Posterior vena cava (tissue), 2 donors: ENCODE measurements at regions of chr19 and their contacts with region 1.

Region 1: DNA sequence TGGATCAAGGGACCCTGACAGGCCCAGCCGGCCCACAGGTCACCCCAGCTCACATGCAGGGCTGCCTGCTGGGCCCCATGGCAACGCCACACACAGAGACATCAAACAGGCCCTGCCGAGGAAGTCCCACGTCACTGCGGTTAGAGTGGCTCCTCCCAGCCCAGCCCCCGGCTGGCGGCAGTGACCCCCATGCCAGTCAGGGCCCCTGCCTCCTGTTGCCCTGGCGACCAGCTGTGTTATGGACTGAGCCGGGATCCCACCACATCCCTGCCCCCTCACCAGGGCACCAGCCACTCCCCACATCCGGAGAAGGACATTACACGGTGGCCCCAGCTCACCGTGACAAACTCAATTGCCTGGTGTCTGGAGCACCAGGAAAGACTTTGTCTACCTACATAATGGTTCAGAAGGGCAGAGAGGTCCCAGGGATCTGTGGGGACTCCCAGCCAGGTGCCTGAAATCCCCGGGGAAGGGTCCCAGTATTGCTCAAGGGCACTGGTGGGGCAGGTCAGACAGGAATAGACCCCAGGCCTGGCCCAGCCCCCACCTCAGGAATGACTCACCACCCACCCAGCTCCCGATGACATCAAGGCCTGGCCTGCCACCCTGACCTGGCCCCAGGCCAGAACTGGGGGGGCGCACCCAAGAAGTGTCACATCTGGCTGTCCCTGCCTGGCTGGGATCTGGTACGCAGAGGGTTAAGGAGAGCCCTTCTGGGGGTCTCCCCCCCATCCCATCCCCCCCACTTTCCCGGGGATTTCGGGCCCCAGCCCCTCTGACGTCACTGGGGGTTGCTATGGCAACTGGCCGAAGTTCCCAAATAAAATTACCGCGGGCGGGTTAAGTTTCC is 30.2 kb upstream of the NANOS3 start:
- DNase-seq: peak; percentile 97

Region 2: DNA sequence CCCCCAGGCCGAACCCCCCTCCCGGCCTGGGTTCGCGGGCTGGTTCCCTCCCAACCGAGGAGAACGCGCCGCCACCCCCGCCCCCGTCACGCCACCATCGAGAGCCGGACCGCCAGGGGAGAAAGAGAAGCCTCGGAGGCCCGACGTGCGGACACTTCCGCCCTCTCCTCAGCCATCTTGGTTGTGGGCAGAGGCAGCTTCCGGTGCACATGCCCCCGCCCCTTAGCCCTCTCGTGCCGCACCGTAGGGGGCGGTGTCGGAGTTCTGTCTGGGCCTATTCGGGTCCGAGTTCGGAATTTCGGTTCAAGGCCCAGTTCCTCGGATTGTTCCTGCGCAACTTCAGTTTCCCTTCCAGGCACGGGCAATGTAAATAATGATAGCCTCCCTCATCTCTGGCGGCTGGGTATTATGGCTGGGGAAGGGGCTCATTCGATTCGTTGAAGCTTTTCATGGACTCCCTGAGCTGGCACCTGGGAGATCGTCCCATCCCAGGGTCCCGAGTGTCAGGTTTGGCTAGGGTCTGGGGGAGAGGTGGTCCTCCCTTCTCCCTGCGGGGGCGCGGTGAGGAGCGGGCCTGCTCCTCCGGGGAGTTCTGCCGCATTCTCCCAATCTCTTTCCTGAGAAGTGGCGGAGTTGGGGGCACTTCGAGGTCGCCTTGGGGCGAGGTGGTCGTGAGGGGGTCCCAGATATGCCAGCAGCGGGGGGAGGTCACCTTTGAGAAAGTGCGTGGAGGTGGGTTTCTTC is 696.4 kb before region 1 on chr19 and contains the starts of genes IER2 and STX10:
- intact Hi-C with region 1: loop called in 1 of 2 experiments (anchors 10 kb)
- DNase-seq: peak; percentile 99
- total RNA-seq, gene IER2: 73.1 to 130 TPM
- total RNA-seq, gene STX10: 31.4 to 39.0 TPM

Region 3: DNA sequence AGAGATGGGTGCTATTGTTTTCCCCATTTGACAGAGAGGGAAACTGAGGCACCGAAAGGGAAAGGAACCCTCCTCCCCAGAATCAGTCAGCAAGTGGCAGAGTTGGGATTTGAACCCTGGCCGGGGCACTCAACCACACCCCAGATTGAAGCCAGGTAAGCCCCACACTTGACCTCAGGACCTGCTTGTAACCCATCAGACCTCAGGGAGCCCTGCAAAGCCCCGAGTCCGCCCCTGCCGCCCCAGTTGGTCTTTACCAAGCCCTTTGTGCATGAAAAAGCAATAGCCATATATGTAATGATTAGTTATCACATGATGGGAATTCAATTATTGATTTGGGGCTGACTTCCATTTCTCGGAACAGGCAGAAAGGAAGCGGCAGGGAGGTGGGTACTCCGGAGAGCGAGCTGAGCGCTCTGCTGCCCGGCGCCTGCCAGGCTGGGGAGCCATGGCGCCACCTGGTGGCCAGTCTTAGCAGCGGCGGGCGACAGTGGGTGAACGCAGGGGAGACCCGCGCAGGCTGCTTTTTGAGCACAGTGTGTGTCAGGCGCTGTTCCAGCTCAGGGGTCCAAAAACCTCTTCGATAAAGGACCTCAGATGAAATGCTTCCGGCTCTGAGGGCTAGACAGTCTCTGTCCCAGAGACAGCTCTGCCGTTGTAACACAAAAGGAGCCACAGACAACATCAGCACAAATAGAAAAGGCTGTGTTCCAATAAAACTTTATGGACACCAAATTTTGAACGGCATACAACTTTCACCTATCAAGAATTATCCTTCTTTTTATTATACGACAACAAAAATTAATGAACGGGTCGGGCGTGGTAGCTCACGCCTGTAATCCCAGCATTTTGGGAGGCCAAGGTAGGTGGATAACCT is 257.6 kb before region 1 on chr19:
- intact Hi-C with region 1: no loop called
- DNase-seq: peak; percentile 91

Region 4: GRCh38 chr19:13880059-13881043 is 33.6 kb after region 1 on chr19:
- intact Hi-C with region 1: no loop called
- DNase-seq: peak; percentile 100